Motor neuron (in vitro differentiated cells): ENCODE measurements at regions of chr7 and their contacts with region 1.

Region 1: DNA sequence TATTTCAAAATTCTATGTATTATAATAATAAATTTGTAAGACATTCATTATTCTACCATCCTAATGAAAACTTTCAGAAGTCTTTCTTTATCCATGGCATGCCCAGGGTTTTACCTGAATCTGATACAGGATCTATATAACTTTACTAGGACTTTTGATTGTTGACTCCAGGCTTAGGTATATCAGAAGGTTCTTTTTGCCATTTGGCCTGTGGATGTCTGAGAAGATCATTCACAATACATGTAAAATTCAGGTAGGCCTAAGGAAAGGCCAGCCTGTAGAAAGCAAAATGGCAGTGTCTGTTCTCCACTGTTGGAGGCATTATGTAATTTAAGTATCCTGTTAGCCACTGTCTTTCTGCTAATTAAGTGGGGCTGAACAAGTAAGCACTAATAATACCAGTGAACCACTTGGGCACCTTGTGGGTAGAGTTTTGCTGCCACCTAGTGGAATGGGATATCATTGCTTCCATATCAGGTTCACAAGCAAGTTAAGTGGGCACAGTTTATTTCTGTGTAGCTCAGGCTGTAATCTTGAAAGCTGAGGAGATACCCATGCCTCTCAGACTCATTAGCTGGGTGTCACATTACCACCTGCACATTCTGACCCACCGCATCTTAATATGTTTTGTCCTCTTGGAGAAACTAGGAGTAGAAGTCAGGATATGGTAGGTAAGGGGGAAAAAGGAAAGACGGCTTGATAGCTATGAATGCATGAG is 105.5 kb downstream of the SEPTIN7 start:
- ATAC-seq: peak; percentile 56 to 92 (median 82)
- H3K4me3 ChIP-seq: no peak overlapping the region
- H3K27ac ChIP-seq: no peak overlapping the region
- H3K4me1 ChIP-seq: no peaks in the 10 kb centered on the region

Region 2: DNA sequence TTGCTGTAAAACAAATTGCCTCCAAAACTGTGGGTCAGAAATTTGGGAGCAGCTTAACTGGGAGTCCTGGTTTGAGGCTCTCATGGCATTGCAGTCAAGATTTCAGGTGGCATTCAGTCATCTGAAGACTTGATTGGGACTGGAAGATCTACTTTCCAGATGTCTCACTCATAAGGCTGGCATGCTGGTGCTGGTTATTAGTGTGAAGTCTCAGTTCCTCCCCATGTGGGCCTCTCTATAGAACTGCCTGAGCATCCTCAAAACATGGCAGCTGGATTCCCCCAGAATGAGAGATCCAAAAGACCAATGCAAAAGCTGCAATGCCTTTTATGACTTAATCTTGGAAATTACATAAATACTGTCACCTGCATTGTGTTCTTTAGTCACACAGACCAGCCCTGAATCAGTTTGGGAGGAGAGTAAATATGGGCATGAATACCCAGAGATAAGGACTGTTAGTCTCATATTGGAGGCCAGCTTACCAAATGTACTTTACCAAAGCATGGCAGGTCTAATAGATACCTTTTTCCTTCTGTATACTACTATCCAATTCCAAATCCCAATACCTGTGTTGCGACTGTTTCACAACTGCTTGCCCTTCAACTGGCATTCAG is 205.0 kb before region 1 on chr7:
- in situ Hi-C with region 1: loop called in 7 of 9 experiments (anchors 10 to 25 kb)
- ATAC-seq: no peak
- H3K4me3 ChIP-seq: no peak overlapping the region
- H3K27ac ChIP-seq: no peak overlapping the region
- H3K4me1 ChIP-seq: no peaks in the 10 kb centered on the region

Region 3: DNA sequence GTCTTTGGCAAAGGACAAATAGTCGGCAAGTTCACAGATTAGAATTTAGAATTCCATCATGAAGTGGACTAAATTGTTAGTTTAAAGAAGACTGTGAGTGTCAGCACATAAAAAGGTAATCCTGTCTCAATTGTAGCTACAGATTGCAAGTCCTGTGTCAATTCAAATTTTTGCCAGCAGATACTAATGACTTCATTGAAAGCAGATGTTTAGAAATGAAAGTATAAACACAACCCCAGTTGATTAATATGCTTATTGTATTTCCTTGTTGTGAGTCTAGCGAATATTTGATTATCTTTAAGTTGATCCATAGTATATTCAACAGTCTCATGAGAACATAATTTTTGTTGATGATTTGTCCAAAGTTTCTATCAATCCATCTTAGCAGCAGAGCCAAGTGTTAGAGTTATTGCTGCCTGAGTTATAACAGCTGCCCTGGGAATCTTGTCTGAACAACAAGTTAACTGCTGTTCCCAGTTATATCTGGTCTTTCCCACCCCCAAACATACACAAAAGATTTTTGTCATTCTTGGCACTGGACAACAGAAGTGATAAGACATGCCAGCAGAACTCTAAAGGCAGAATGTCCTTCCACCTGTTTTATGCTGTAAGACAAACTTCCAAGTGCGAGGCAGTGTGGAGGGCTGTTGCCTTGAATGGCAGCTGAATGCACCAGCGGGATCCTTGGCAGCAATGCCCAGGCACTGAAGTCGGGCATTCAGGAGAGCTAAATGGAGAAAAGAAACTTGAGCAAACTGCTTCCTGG is 190.1 kb before region 1 on chr7:
- in situ Hi-C with region 1: loop called in 6 of 9 experiments (anchors 25 kb)
- ATAC-seq: peak in 4 of 8 experiments; percentile 34 to 83 (median 53)
- H3K4me3 ChIP-seq: no peak overlapping the region
- H3K27ac ChIP-seq: no peak overlapping the region
- H3K4me1 ChIP-seq: no peaks in the 10 kb centered on the region

Region 4: GRCh38 chr7:36057323-36057722 is 151.0 kb after region 1 on chr7:
- in situ Hi-C with region 1: no loop called
- ATAC-seq: no peak
- H3K4me3 ChIP-seq: no peak overlapping the region
- H3K27ac ChIP-seq: no peak overlapping the region
- H3K4me1 ChIP-seq: peaks cover 0 to 1% of the 10 kb centered on the region in 2 donors

Region 5: GRCh38 chr7:36535866-36536664 is 629.7 kb after region 1 on chr7:
- in situ Hi-C with region 1: no loop called
- ATAC-seq: no peak
- H3K4me3 ChIP-seq: no peak overlapping the region
- H3K27ac ChIP-seq: no peak overlapping the region
- H3K4me1 ChIP-seq: no peaks in the 10 kb centered on the region

Region 6: GRCh38 chr7:36707465-36707864 is 801.1 kb after region 1 on chr7:
- in situ Hi-C with region 1: no loop called
- ATAC-seq: no peak
- H3K4me3 ChIP-seq: no peak overlapping the region
- H3K27ac ChIP-seq: no peak overlapping the region
- H3K4me1 ChIP-seq: peaks cover 13 to 14% of the 10 kb centered on the region in 2 donors

Region 7: DNA sequence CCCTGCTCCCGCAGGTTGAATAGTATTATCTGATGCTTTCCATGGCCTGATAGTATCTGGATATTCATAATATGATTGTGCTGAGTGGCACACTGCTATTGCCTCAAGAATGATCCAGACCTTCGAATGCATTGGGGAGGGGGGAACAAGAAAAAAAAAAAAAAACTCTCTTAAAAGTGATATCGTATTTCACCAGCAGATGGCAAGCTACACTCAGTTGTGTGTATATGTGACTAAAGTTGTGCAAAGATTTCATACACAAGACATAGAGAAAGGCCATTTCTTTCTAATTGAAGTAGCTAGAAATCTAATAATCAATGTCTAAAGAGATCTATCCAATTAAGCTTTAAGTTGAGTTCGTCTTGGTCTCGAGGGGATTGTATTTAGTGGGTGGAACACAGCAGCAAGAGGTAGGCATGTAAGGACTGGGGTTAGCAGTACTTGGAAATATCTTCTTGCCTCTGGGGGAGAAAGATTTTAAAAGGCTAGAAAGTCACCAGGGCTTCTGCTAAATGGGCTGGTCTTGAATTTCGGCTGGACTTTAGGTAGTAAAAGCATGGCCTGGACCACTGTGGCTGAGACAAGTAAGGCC is 1995.0 kb after region 1 on chr7:
- in situ Hi-C with region 1: no loop called
- ATAC-seq: peak; percentile 25 to 73 (median 40)
- H3K4me3 ChIP-seq: no peak overlapping the region
- H3K27ac ChIP-seq: no peak overlapping the region
- H3K4me1 ChIP-seq: no peaks in the 10 kb centered on the region